PC-9 (cell line): ENCODE measurements at regions of chr12 and their contacts with region 1.

Region 1: DNA sequence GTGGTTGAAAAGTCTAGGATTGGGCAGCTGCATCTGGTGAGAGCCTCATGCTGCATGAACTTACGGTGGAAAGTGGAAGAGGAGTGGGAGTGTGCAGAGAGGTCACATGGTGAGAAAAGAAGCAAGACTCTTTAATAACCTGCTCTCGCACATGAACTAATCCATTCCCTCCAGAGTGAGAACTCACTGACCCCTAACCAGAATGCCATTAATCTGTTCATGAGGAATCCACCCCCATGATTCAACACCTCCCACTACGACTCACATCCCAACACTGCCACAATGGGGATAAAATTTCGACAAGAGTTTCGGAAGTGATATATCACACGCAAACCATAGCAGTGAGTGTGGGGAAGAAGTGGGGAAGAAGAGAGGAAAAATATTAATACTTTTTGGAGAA is 377.4 kb downstream of the NAV3 start:
- DNase-seq: no peak
- H3K4me3 ChIP-seq: no peak overlapping the region
- H3K27ac ChIP-seq: no peak overlapping the region
- H3K4me1 ChIP-seq: no peaks in the 10 kb centered on the region
- H3K27me3 ChIP-seq: no peaks in the 10 kb centered on the region
- CTCF ChIP-seq: no peak

Region 2: GRCh38 chr12:78331753-78332152 is 123.7 kb after region 1 on chr12:
- CTCF ChIA-PET with region 1: no interaction called
- POLR2A ChIA-PET with region 1: no interaction called
- intact Hi-C with region 1: no loop called
- DNase-seq: no peak
- H3K4me3 ChIP-seq: no peak overlapping the region
- H3K27ac ChIP-seq: no peak overlapping the region
- H3K4me1 ChIP-seq: no peaks in the 10 kb centered on the region
- H3K27me3 ChIP-seq: no peaks in the 10 kb centered on the region
- CTCF ChIP-seq: no peak

Region 3: DNA sequence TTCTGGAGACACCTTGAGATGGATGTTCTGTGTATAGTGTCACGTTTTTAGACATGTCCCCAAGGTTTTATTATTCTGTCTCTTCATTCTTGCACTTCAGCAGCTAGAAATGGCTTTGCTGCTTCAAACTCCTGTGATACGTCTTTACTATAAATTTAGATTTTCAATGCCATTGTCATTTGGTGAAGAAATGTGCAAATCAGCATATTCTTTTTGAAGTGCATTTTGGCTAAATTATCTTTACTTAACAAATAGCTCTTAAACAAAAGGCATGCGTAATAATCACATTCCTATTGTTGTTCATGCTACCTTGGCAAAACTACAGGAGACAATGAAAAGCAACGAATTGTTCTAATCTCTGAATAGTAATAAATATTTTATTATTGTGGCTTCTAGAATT is 153.6 kb after region 1 on chr12:
- CTCF ChIA-PET with region 1: no interaction called
- POLR2A ChIA-PET with region 1: no interaction called
- intact Hi-C with region 1: no loop called
- DNase-seq: no peak
- H3K4me3 ChIP-seq: no peak overlapping the region
- H3K27ac ChIP-seq: no peak overlapping the region
- H3K4me1 ChIP-seq: no peaks in the 10 kb centered on the region
- H3K27me3 ChIP-seq: no peaks in the 10 kb centered on the region
- CTCF ChIP-seq: no peak

Region 4: GRCh38 chr12:78406828-78407227 is 198.7 kb after region 1 on chr12:
- CTCF ChIA-PET with region 1: interaction called, 15 read pairs
- POLR2A ChIA-PET with region 1: no interaction called
- intact Hi-C with region 1: no loop called
- DNase-seq: no peak
- H3K4me3 ChIP-seq: no peak overlapping the region
- H3K27ac ChIP-seq: no peak overlapping the region
- H3K4me1 ChIP-seq: no peaks in the 10 kb centered on the region
- H3K27me3 ChIP-seq: no peaks in the 10 kb centered on the region
- CTCF ChIP-seq: no peak

Region 5: DNA sequence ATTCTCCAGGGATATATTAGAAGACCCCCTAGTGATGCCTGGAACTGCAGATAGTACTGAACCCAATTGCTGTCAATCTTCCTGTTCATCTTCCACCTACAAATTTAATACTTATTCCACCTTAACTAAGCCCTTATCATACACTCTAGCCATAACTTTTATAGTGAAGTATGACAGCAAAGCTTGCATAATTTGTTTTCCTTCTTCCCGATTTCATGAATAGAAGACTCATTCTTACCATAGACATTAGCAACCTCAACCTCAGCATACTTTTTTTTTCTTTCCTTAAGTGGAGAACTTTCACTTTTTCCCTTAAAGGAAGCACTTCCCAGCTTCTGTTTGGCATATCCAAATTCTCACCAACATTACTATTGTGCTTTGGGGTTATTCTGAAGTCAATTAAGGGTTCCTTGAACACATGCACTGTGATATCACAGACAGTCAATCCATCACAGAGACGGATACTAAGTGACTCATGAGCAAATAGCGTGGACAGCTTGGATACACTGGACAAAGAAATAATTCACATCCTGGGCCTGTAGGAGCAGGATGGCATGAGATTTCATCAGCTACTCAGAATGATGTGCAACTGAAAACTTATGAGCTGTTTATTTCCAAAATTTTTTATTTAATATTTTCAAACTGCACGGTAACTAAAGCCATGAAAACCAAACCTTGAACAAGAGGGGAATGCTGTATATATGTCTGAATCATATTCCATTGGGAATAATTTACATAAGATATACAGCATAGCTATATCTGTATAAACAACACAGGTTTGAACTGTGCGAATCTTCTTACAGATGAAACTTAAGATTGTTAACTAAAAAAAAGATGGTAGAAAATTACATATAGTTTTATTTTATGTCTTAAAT is 720.3 kb after region 1 on chr12:
- CTCF ChIA-PET with region 1: no interaction called
- POLR2A ChIA-PET with region 1: no interaction called
- intact Hi-C with region 1: no loop called
- DNase-seq: peak in 1 of 2 experiments; percentile 36
- H3K4me3 ChIP-seq: no peak overlapping the region
- H3K27ac ChIP-seq: peak overlapping the region; percentile 54
- H3K4me1 ChIP-seq: no peaks in the 10 kb centered on the region
- H3K27me3 ChIP-seq: no peaks in the 10 kb centered on the region
- CTCF ChIP-seq: no peak